PC-9 (cell line): ENCODE measurements at regions of chr2 and their contacts with region 1.

Region 1: GRCh38 chr2:26767894-26768487 is 3.9 kb downstream of the SLC35F6 start:
- DNase-seq: no peak
- H3K4me3 ChIP-seq: no peak overlapping the region
- H3K27ac ChIP-seq: no peak overlapping the region
- H3K4me1 ChIP-seq: peaks cover 67% of the 10 kb centered on the region
- H3K27me3 ChIP-seq: no peaks in the 10 kb centered on the region
- CTCF ChIP-seq: no peak

Region 2: GRCh38 chr2:26274058-26274613 is 493.9 kb before region 1 on chr2:
- CTCF ChIA-PET with region 1: no interaction called
- POLR2A ChIA-PET with region 1: no interaction called
- intact Hi-C with region 1: no loop called
- DNase-seq: peak; percentile 25 to 71
- H3K4me3 ChIP-seq: no peak overlapping the region
- H3K27ac ChIP-seq: peak overlapping the region; percentile 73
- H3K4me1 ChIP-seq: peaks cover 21% of the 10 kb centered on the region
- H3K27me3 ChIP-seq: no peaks in the 10 kb centered on the region
- CTCF ChIP-seq: no peak

Region 3: DNA sequence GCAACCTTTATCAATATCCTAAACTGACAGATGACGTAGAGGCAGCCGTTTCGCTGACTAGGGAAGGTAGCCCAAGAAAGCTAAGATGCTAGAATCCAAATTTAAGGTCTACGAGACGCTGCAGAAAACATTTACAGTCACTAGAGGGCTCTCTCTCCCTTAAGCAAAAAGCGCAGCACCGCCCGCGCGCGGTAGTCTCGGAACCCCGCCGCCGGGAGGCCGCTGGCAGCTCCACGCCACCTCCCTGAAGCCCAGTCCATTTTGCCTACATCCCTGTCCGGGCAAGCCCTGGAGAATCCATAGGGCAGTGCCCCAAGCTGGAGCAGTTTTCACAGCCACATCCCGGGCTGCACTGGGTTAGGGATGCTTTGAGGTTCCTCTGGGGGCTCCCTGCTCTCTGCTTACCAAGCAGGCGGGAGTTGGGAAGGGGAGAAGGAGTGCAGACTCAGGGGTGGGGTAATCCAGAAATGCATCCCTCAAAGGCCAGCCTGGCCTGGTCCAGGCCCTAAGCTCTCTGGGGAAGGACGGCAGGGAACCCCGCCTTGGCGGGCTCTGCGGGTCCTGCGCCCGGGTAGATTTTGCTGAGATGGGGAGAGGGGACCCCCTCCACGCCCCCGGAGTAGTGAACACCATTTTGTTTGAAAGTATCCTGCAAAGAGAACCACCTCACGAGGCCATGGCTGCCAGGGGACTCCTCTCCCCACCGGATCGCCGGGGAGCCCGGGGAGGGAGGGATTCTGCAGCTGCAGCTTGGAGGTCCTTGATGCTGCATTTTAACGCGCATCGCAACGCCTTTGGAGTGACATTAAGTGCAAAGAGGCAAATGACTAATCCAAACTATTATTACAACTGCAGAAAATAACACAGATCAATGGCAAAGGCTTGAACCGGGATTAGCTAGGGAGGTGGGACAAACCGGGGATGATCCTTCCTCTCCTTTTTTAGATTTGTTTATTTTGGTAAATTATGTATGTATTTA is 78.6 kb after region 1 on chr2:
- CTCF ChIA-PET with region 1: no interaction called
- POLR2A ChIA-PET with region 1: no interaction called
- intact Hi-C with region 1: no loop called
- DNase-seq: peak; percentile 57
- H3K4me3 ChIP-seq: no peak overlapping the region
- H3K27ac ChIP-seq: no peak overlapping the region
- H3K4me1 ChIP-seq: no peaks in the 10 kb centered on the region
- H3K27me3 ChIP-seq: peaks cover 25% of the 10 kb centered on the region
- CTCF ChIP-seq: peak; percentile 83

Region 4: DNA sequence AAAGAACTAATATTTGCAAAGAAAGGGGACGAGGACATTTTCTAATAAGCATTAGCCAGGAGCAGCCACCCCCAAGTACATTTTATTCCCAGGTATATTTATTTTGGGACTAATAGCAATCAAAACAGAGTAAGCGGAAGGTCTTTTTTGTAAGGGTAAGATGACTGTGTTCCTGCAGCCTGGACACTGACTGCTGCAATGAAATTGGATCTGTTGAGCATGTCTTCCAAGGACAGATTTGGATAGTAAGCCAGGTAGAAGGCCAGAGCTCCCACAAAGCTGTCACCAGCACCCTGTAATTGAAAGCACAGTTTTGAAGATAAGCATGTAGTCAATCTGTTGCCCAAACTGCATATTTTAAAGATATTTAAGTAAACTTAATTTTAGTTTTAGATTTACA is 1013.5 kb after region 1 on chr2:
- CTCF ChIA-PET with region 1: no interaction called
- POLR2A ChIA-PET with region 1: interaction called, 18 read pairs
- intact Hi-C with region 1: no loop called
- DNase-seq: no peak
- H3K4me3 ChIP-seq: no peak overlapping the region
- H3K27ac ChIP-seq: no peak overlapping the region
- H3K4me1 ChIP-seq: no peaks in the 10 kb centered on the region
- H3K27me3 ChIP-seq: no peaks in the 10 kb centered on the region
- CTCF ChIP-seq: no peak